ENCODE measurements at regions of chr19 and their contacts with region 1.

Region 1: DNA sequence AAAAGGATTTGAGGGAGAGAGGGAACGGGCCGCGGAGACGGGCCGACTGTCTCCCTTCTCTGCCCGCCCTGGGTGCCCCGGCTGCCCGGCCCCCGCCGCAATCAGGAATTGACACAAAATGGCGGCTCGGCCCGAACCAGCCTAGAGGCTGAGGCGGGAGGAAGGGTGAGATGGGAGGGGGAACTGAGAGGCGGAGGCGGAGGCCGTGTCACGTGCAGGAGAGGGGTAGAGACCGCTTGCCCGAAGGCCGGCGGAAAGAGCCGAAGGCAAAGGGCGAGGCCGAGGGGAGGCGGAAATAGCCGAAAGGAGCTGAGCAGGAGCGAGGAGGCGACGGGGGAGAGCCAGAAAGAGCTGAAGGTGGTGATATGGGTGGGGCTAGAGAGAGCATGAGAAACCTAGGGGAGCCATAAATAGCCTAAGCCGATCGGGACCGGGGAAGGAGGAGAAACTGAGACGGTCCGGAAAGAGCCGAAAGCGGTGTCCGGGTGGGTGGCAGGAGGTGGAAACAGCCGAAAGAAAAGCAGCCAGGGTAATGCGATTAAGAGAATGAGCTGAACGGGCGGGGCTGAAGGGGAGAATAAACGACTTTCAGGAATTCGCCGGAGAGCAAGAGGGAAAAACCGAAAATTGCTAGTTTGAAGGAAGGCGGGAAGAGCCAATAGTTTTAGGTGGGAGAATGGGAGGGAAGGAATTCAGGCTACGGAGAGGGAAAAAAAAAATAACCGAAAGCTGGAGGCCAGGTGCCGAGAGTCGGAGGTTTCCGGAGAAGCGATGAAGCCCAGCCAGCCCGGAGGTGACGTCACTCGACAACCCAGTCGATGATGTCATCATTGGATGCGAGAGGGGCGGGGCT is at the start of gene ZC3H4:
- DNase-seq: peak; percentile 100
- H3K4me3 Mint-ChIP-seq: peak within 1 kb of the TSS; percentile 85
- H3K27ac Mint-ChIP-seq: peak within 1 kb of the TSS; percentile 97
- H3K4me1 Mint-ChIP-seq: peaks cover 24% of the 10 kb centered on the region
- H3K27me3 Mint-ChIP-seq: no peaks in the 10 kb centered on the region
- total RNA-seq, gene ZC3H4: 77.1 to 78.6 TPM

Region 2: GRCh38 chr19:46788262-46788967 is 324.8 kb before region 1 on chr19 and contains the start of gene SLC1A5:
- CTCF ChIA-PET with region 1: no interaction called
- POLR2A ChIA-PET with region 1: interaction called, 8 read pairs
- intact Hi-C with region 1: loop called (anchors 5 kb)
- DNase-seq: peak; percentile 99
- H3K4me3 Mint-ChIP-seq: peak within 1 kb of the TSS; percentile 95
- H3K27ac Mint-ChIP-seq: peak within 1 kb of the TSS; percentile 99
- H3K4me1 Mint-ChIP-seq: peaks cover 38% of the 10 kb centered on the region
- H3K27me3 Mint-ChIP-seq: no peaks in the 10 kb centered on the region
- total RNA-seq, gene SLC1A5: 202 to 205 TPM

Region 3: DNA sequence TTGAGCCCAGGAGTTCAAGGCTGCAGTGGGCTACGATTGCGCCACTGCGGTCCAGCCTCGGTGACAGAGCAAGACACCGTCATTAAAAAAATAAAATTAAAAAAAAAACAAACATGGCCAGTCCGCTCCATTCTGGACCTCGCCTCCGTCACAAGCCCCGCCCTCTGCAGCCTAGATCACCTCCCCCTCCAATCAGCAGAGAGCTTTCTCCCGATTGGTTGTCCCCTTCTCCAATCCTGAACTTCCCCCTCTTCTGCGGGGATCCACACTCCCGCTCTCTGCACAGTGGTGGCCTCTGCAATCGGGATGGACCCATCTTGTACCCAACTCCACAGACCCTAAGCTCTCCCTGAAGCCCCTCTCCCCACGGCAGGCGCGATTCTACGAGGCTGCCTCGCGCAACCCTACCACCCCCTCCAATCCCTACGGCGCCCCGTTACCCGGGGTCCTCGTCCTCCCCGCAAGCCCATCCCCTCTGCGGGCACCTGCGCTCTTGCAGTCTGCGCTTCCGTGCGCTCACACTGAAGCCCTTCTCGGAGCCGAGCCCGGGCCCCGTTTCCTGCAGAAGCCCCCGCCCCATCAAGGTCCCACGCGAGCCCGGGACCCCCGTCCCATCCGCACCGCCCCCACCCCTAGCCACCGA is 65.3 kb before region 1 on chr19:
- CTCF ChIA-PET with region 1: interaction called, 3 read pairs
- POLR2A ChIA-PET with region 1: interaction called, 7 read pairs
- intact Hi-C with region 1: loop called (anchors 2 kb)
- DNase-seq: peak; percentile 91
- H3K4me3 Mint-ChIP-seq: peak overlapping the region; percentile 99
- H3K27ac Mint-ChIP-seq: peak overlapping the region; percentile 87
- H3K4me1 Mint-ChIP-seq: peaks cover 12% of the 10 kb centered on the region
- H3K27me3 Mint-ChIP-seq: peaks cover 1% of the 10 kb centered on the region

Region 4: DNA sequence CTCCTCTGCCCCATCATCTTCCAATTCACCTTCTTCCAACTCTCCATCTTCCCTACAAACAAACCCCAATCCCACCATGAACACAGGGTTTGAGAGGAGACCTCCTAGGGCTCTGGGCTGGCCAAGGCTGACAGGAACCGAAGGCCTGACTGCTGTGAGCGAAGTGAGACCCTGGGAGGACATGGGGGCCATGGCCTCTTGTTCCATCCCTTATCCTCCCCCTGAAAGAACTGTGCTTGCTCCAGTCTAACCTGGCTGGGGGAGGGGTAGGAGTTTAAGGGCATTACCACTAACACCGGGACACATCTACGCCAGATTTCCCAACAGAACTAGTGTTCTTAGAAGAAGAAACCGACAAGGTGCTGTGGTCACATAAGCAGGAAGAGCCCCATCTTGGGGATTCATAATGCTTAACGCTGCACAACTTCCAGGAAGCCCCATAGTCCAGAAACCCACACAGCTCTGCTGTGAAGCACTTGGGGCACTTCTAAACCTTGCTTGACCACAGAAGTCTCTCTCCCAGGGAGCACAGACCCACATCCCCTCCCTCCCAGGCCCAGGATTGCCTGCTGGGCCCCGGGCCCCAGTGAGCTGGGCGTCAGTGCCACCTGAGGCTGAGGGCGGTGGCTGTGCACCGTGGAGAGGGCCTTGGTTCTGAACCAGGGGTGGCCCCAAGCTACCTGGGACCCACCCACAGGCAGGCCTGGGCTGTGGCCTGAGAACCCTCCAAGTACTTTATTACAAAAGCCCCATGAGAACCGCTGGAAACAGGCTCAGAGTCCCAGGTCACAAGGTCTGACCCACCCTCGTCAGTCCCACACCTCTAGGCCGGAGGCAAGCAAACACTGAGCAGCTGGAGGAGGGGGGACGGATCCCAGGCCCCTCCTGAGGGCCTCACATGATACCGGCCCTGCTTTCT is 18.4 kb before region 1 on chr19:
- CTCF ChIA-PET with region 1: interaction called, 11 read pairs
- POLR2A ChIA-PET with region 1: interaction called, 205 read pairs
- intact Hi-C with region 1: loop called (anchors 1 kb)
- DNase-seq: peak; percentile 83
- H3K4me3 Mint-ChIP-seq: peak overlapping the region; percentile 77
- H3K27ac Mint-ChIP-seq: peak overlapping the region; percentile 98
- H3K4me1 Mint-ChIP-seq: peaks cover 66% of the 10 kb centered on the region
- H3K27me3 Mint-ChIP-seq: no peaks in the 10 kb centered on the region

Region 5: DNA sequence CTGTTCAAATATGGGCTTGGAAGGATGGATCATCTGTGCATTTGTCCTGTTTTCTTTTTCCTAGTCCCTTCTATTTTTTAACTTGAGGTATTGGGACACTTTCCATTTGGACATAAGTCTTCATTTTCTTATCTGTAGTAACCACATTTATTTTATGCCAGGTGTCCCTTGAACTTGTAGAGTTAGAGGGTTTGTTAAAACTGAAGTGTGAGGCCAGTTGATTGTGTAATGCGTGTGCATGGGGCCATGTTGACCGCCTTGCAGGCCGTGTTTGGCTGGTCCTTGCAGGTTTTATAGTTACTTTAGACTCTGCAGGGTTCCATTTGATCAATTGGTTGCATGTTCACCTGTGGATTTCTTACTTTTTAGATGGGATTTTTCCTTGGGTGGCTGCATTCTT is 38.4 kb after region 1 on chr19:
- CTCF ChIA-PET with region 1: no interaction called
- POLR2A ChIA-PET with region 1: no interaction called
- intact Hi-C with region 1: no loop called
- DNase-seq: no peak
- H3K4me3 Mint-ChIP-seq: no peak overlapping the region
- H3K27ac Mint-ChIP-seq: no peak overlapping the region
- H3K4me1 Mint-ChIP-seq: peaks cover 57% of the 10 kb centered on the region
- H3K27me3 Mint-ChIP-seq: no peaks in the 10 kb centered on the region

Region 6: DNA sequence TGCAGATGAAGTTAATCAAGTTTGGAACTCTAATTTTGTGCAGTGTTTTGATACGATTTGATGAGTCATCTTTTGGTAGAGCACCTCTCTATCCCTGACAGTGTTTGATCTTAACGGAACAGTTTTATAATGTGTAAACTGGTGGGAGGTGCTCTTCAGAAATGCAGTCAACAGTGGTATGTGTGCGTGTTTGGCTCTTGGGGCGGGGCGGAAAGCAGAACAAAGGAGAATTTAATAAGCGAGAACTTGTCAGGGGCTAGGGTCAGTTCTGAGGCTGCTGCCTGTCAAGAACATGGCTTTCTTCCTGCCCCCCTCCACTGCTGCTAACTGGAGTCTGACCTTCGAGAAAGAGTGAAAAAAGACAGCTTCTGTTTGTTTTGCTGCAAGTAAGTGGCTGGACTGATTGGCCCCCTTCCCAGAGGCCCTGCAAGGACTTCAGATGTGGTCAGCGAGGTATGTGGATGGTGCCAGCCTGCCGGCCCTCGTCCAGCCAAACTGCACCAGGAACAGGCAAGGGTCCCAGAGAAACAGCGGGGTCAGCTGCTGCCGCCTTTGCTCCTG is 77.0 kb after region 1 on chr19:
- CTCF ChIA-PET with region 1: interaction called, 7 read pairs
- POLR2A ChIA-PET with region 1: interaction called, 15 read pairs
- intact Hi-C with region 1: loop called (anchors 1 kb)
- DNase-seq: peak; percentile 84
- H3K4me3 Mint-ChIP-seq: peak overlapping the region; percentile 58
- H3K27ac Mint-ChIP-seq: peak overlapping the region; percentile 68
- H3K4me1 Mint-ChIP-seq: peaks cover 65% of the 10 kb centered on the region
- H3K27me3 Mint-ChIP-seq: no peaks in the 10 kb centered on the region

Region 7: DNA sequence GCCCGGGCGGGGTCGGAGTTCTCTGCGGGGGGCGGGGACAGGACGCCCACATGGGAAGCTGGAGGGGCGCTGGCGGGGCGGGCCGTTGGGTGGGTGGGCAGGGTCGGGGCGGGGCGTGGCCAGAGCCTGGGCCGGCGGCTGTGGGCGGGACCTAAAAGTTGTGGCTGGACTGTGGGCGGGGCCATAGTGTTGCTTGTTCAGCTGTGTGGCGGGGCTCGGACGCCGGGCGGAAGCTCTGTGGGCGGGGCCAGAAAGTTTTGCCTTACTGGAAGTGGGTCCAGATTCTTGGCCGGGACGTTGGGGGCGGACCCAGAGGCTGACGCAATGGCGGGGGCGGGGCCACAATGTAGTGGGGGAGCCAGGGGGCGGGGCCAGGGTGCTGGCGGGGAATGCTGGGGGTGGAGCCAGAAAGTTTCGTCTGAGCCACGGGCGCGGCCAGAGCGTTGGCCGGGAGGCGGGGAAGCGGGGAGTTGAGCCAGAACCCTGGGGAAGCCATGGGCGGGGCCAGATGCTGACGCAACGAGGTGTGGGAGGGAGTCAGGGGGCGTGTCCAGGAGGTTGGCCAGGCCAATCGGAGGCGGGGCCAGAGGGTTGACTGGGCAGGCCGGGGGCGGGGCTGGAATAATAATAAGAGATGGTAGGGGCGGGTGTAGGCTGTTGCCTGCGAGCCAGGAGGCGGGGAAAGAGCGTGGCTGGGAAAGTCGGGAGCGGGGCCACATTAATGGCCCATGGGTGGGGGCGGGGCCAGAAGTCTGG is 143.6 kb after region 1 on chr19:
- CTCF ChIA-PET with region 1: no interaction called
- POLR2A ChIA-PET with region 1: interaction called, 7 read pairs
- intact Hi-C with region 1: loop called (anchors 1 kb)
- DNase-seq: peak; percentile 100
- H3K4me3 Mint-ChIP-seq: peak overlapping the region; percentile 90
- H3K27ac Mint-ChIP-seq: peak overlapping the region; percentile 98
- H3K4me1 Mint-ChIP-seq: peaks cover 32% of the 10 kb centered on the region
- H3K27me3 Mint-ChIP-seq: no peaks in the 10 kb centered on the region

Region 8: GRCh38 chr19:47600246-47601179 is 487.3 kb after region 1 on chr19:
- CTCF ChIA-PET with region 1: no interaction called
- POLR2A ChIA-PET with region 1: interaction called, 3 read pairs
- intact Hi-C with region 1: loop called (anchors 1 kb)
- DNase-seq: peak; percentile 100
- H3K4me3 Mint-ChIP-seq: peak overlapping the region; percentile 83
- H3K27ac Mint-ChIP-seq: peak overlapping the region; percentile 86
- H3K4me1 Mint-ChIP-seq: peaks cover 30% of the 10 kb centered on the region
- H3K27me3 Mint-ChIP-seq: no peaks in the 10 kb centered on the region